Heart right ventricle (tissue), 16 donors: ENCODE measurements at regions of chr16 and their contacts with region 1.

Region 1: DNA sequence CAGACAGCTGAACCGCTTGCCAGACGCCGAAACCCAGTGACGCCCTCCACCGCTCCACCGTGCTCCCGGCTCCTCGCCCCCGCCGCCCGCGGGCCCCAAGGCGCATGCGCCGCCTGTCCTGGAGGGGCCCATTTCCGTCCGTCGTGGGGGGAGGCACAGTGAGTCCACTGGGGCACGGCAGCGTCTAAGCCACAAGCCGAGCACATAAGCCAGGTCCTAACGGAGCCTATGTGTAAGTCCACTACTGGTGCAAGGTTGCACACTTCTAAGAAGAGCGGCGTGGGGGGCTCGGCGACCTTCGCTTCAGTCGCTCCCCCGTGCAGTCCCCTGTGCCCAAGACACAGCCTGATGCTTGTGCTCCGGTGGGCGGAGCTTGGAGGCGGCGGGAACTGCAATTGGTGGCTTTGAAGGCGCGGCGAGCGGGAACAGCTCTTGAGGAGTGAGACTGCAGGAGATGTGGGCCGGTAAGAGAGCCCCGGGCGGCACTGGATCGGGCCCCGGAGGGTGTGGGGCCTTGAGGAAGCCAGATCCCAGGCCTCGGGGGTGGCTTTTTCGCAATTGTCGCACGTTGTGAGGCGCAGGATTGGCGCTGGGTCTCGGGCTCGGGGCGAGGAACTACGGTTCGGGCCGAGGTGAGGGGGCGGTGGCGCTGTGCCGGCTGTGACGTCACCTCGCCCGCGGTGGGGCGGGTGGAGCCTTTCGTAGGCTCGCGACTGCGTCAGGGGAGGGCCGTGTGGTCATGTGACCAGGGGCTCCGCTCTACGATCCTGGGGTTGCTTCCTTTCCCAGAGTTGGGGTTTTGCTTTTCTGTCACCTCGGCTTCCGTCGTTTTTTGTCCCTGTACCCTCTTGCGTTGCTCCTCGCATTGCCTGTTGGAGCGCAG is at the starts of genes CENPN and CMC2:
- DNase-seq: peak; percentile 98 to 99
- ATAC-seq: peak; percentile 94 to 98 (median 96)
- H3K4me3 ChIP-seq: peak within 1 kb of the TSS; percentile 74 to 98 (median 84)
- H3K27ac ChIP-seq: peak within 1 kb of the TSS; percentile 93 to 100 (median 98)
- H3K4me1 ChIP-seq: peaks cover 4 to 45% (median 29%) of the 10 kb centered on the region in 9 donors
- H3K27me3 ChIP-seq: no peaks in the 10 kb centered on the region
- CTCF ChIP-seq: peak in 2 of 9 donors; percentile 9 to 10
- total RNA-seq, gene CENPN: 6.3 to 16.2 (median 11.0) TPM
- total RNA-seq, gene CMC2: 95.1 to 129 (median 121) TPM

Region 2: GRCh38 chr16:80931801-80932712 is 75.0 kb before region 1 on chr16:
- intact Hi-C with region 1: loop called in 1 of 10 experiments (anchors 2 kb)
- DNase-seq: peak; percentile 62 to 82
- ATAC-seq: peak; percentile 83 to 93 (median 88)
- H3K4me3 ChIP-seq: peak overlapping the region; percentile 7 to 63 (median 52)
- H3K27ac ChIP-seq: peak overlapping the region; percentile 32 to 92 (median 86)
- H3K4me1 ChIP-seq: peaks cover 0 to 21% (median 10%) of the 10 kb centered on the region in 9 donors
- H3K27me3 ChIP-seq: peaks cover 0 to 43% (median 0%) of the 10 kb centered on the region in 7 donors
- CTCF ChIP-seq: peak in 3 of 9 donors; percentile 20 to 33 (median 28)

Region 3: GRCh38 chr16:80948886-80949493 is 58.1 kb before region 1 on chr16:
- intact Hi-C with region 1: no loop called
- DNase-seq: peak; percentile 24 to 63
- ATAC-seq: peak in 4 of 8 donors; percentile 43 to 74 (median 60)
- H3K4me3 ChIP-seq: no peak overlapping the region
- H3K27ac ChIP-seq: no peak overlapping the region
- H3K4me1 ChIP-seq: no peaks in the 10 kb centered on the region
- H3K27me3 ChIP-seq: no peaks in the 10 kb centered on the region
- CTCF ChIP-seq: peak; percentile 37 to 71 (median 59)

Region 4: DNA sequence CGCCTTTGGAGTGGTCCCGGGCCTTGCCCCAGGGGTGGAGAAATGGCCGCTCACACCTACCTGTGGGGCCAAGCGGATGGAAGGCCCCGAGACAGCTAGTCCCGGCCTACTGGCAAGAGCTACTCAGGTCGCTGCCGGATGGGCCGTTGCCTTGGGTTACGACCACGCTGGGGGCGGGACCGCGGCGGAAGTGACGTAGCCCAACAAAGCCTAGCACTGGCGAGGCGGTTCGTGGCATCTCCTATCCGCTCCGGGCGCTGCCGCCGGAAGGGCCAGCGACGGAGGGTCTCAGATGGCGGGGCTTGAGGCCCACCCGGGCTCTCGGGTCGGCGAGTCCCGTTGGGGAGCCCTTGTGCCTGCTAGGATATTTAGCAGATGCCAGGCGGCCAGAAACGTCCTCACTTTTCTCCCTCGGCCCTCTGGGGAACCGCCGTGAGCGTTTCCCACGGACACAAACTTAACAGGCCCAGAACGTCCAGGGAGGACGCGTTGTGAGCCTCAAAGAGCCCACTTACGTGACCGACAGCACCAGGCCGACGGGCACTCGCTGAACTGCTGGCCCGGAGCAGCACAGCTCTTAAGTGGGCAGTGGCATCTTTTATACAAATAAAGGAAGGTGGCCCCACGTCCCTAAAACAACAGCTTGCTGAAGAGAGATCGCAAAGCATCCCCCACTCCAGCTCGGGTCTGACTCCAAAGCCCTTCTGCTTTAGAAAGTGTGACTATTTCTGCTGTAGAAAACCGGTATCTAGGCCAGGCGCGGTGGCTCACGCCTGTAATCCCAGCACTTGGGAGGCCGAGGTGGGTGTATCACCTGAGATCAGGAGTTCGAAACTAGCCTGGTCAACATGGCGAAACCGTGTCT is 70.3 kb after region 1 on chr16 and contains the start of gene C16orf46:
- intact Hi-C with region 1: loop called in 3 of 10 experiments (anchors 1 to 5 kb)
- DNase-seq: peak; percentile 97 to 98
- ATAC-seq: peak; percentile 98 to 100 (median 99)
- H3K4me3 ChIP-seq: peak within 1 kb of the TSS; percentile 32 to 87 (median 73)
- H3K27ac ChIP-seq: peak within 1 kb of the TSS; percentile 65 to 99 (median 96)
- H3K4me1 ChIP-seq: peaks cover 0 to 13% (median 5%) of the 10 kb centered on the region in 9 donors
- H3K27me3 ChIP-seq: no peaks in the 10 kb centered on the region
- CTCF ChIP-seq: peak in 1 of 9 donors; percentile 3
- total RNA-seq, gene C16orf46: 0.19 to 2.0 (median 0.47) TPM in 8 of 10 donors, not detected in the others

Region 5: DNA sequence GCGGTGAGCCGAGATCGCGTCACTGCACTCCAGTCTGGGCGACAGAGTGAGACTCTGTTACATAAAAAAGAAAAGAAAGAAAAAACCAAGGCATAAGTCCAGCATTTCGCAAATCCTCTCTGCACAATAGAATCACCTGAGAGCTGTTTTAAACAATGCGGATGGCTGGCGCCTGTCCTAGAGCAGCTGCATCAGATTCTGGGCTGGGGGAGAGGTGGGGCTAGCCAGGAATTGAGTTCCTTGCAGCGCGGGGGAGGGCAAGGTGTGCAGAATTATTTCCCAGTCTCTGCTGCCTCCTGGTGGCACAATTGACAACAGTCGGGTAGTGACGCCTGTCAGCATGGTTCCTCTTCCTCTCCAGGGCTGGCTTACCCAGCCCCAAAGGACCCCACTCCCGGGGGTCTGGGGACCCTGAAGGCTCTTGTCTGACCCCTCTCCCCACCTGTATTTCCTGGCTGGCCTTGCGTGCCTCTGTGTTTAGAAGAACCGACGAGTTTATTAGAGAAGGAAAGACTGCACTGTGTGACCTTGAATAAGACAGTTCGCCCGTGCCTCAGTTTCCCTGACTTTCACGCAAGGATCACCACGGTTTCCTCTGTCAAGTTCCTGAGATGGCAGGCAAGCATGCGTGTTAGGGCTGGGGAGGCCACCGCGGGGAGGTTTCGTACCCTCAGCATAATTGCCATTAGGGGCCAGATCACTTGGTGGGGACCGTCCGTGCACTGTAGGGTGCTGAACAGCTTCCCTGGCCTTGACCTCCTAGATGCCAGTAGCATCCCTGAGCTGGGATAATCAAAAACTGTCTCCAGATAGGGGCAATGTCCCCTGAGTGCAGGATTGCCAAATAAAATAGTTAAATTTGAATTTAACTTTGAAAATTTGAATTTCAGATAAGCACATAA is 731.1 kb after region 1 on chr16:
- intact Hi-C with region 1: loop called in 2 of 10 experiments (anchors 10 kb)
- DNase-seq: peak; percentile 68 to 89
- ATAC-seq: peak; percentile 87 to 97 (median 94)
- H3K4me3 ChIP-seq: peak overlapping the region in 7 of 10 donors; percentile 12 to 43 (median 32)
- H3K27ac ChIP-seq: peak overlapping the region in 5 of 10 donors; percentile 25 to 79 (median 61)
- H3K4me1 ChIP-seq: peaks cover 0 to 24% (median 9%) of the 10 kb centered on the region in 9 donors
- H3K27me3 ChIP-seq: peaks cover 0 to 9% (median 0%) of the 10 kb centered on the region in 7 donors
- CTCF ChIP-seq: peak; percentile 61 to 91 (median 85)